Endothelial cell of umbilical vein (primary cell): ENCODE measurements at regions of chr12 and their contacts with region 1.

Region 1: DNA sequence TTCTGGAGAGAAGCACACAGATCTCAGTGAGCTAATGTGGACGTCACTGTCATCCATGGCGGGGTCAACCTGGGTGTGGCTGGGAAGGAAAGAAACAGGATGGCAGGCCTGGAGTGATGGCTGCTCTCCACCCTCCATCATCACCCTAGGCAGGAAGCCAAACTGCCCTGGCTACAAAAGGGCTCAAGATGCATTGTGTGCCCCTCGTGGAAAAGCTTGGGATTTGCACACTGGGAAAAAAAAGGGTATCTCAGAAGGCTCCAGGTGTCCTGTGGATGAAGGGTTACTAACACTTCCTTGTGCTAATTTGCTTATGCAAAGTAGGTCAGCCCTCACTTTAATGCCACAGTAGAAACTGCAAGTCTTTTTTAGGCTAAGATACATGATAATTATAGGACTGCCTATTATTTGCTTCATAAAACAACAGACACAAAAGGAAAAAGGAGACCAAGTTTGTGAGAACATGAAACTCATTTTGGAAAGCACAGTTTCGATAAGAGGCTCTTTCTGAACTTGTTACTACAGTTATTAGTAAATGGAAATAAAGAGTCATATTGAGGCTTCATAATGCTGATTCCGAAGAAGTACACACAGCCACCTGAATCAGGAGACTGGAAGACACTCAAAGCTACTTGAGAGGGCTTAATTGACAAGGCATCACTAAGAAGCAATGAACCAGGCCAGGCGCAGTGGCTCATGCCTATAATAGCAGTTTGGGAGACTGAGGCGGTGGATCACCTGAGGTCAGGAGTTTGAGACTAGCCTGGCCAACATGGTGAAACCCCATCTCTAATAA is 18.9 kb downstream of the RFC5 start:
- DNase-seq: peak; percentile 26
- H3K4me3 ChIP-seq: no peak overlapping the region
- H3K27ac ChIP-seq: no peak overlapping the region
- H3K4me1 ChIP-seq: peaks cover 12% of the 10 kb centered on the region
- H3K27me3 ChIP-seq: no peaks in the 10 kb centered on the region
- CTCF ChIP-seq: peak; percentile 12 to 29
- POLR2A ChIP-seq: no peak

Region 2: DNA sequence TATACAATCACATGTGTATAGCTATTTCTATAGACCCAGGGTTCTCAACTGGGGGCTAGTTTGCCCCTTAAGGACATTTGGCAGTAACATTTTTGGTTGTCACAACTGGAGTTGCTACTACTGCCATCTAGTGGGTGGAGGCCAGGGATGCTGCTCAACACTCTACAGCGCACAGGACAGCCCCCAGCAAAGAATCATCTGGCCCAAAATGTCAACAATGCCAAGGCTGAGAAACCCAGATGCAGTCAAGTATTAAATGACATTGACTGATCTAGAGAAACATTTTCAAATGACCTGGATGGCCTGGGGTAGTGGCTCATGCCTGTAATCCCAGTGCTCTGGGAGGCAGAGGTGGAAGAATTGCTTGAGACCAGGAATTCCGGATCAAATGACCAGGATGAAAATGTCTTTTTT is 19.7 kb after region 1 on chr12:
- CTCF ChIA-PET with region 1: interaction called, 14 read pairs
- POLR2A ChIA-PET with region 1: no interaction called
- dilution Hi-C with region 1: no loop called
- intact Hi-C with region 1: loop called (anchors 2 kb)
- DNase-seq: peak; percentile 61
- H3K4me3 ChIP-seq: no peak overlapping the region
- H3K27ac ChIP-seq: no peak overlapping the region
- H3K4me1 ChIP-seq: peaks cover 36% of the 10 kb centered on the region
- H3K27me3 ChIP-seq: no peaks in the 10 kb centered on the region
- CTCF ChIP-seq: peak; percentile 58 to 68
- POLR2A ChIP-seq: no peak